ENCODE measurements at regions of chr2 and their contacts with region 1.

Region 1: GRCh38 chr2:161586517-161587167 is 37.6 kb upstream of the SLC4A10 start:
- DNase-seq: peak in 2 of 9 experiments; percentile 30 to 42
- ATAC-seq: peak; percentile 38
- H3K4me3 ChIP-seq: no peak overlapping the region
- H3K4me3 Mint-ChIP-seq: no peak overlapping the region
- H3K27ac ChIP-seq: no peak overlapping the region
- H3K27ac Mint-ChIP-seq: no peak overlapping the region
- H3K4me1 ChIP-seq: no peaks in the 10 kb centered on the region
- H3K4me1 Mint-ChIP-seq: no peaks in the 10 kb centered on the region
- H3K27me3 ChIP-seq: no peaks in the 10 kb centered on the region
- H3K27me3 Mint-ChIP-seq: no peaks in the 10 kb centered on the region
- CTCF ChIP-seq: peak; percentile 81

Region 2: GRCh38 chr2:161625314-161625919 is 38.8 kb after region 1 on chr2:
- CTCF ChIA-PET with region 1: no interaction called
- POLR2A ChIA-PET with region 1: no interaction called
- intact Hi-C with region 1: no loop called
- DNase-seq: peak in 2 of 9 experiments; percentile 3 to 14
- ATAC-seq: no peak
- H3K4me3 ChIP-seq: no peak overlapping the region
- H3K4me3 Mint-ChIP-seq: peak overlapping the region; percentile 19
- H3K27ac ChIP-seq: no peak overlapping the region
- H3K27ac Mint-ChIP-seq: no peak overlapping the region
- H3K4me1 ChIP-seq: peaks cover 8% of the 10 kb centered on the region
- H3K4me1 Mint-ChIP-seq: peaks cover 15% of the 10 kb centered on the region
- H3K27me3 ChIP-seq: peaks cover 0 to 4% of the 10 kb centered on the region in 2 experiments
- H3K27me3 Mint-ChIP-seq: peaks cover 41% of the 10 kb centered on the region
- CTCF ChIP-seq: no peak

Region 3: GRCh38 chr2:161766334-161766733 is 179.7 kb after region 1 on chr2:
- CTCF ChIA-PET with region 1: no interaction called
- POLR2A ChIA-PET with region 1: no interaction called
- intact Hi-C with region 1: no loop called
- DNase-seq: no peak
- ATAC-seq: no peak
- H3K4me3 ChIP-seq: no peak overlapping the region
- H3K4me3 Mint-ChIP-seq: no peak overlapping the region
- H3K27ac ChIP-seq: no peak overlapping the region
- H3K27ac Mint-ChIP-seq: no peak overlapping the region
- H3K4me1 ChIP-seq: no peaks in the 10 kb centered on the region
- H3K4me1 Mint-ChIP-seq: no peaks in the 10 kb centered on the region
- H3K27me3 ChIP-seq: no peaks in the 10 kb centered on the region
- H3K27me3 Mint-ChIP-seq: no peaks in the 10 kb centered on the region
- CTCF ChIP-seq: no peak

Region 4: GRCh38 chr2:161946489-161947107 is 360.0 kb after region 1 on chr2:
- CTCF ChIA-PET with region 1: interaction called, 44 read pairs
- POLR2A ChIA-PET with region 1: interaction called, 3 read pairs
- intact Hi-C with region 1: loop called (anchors 1 kb)
- DNase-seq: peak in 2 of 9 experiments; percentile 35 to 38
- ATAC-seq: no peak
- H3K4me3 ChIP-seq: no peak overlapping the region
- H3K4me3 Mint-ChIP-seq: no peak overlapping the region
- H3K27ac ChIP-seq: no peak overlapping the region
- H3K27ac Mint-ChIP-seq: no peak overlapping the region
- H3K4me1 ChIP-seq: no peaks in the 10 kb centered on the region
- H3K4me1 Mint-ChIP-seq: peaks cover 3% of the 10 kb centered on the region
- H3K27me3 ChIP-seq: no peaks in the 10 kb centered on the region
- H3K27me3 Mint-ChIP-seq: no peaks in the 10 kb centered on the region
- CTCF ChIP-seq: peak; percentile 66

Measured in CD8-positive, alpha-beta T cell (primary cell).